ENCODE measurements at regions of chr15 and their contacts with region 1.

Region 1: DNA sequence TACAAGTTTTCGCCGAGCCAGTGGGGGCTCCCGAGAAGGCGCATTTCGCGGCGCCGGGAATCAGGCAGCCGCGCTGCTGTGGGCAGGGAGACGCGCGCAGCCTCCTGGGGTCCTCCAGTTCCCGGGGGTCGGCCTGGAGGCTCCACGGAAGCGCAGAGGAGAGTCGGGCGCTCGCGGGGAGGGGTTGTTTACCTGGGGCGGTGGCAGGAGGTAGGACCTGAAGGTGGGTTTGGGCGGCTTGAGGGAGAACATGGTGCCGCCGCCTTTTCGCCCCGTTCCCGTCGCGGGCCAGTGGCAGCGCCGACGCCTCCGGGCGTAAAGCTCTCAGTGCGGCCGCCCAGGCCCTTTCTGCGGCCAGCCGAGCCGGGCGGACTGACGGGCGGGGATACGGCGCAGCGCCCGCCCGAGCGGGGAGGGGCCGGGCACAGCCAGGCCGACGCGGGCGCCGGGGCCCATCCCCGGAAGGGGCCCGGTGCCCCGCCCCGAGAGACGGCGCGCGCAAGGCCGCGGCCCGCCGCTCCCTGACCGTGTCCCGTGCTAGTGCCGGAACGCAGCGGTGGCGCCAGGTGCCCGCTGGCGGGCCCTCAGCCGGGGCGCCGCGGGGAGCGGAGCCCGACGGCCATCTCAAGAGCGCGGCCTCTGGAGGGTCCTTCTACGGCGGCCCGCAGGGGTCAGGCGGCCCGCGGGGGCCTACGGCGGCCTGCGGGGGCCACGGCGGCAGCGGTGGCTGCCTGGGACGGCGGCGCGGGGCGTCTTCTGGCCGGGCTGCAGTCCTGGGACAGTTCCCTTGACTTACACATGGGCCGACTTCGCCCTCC is at the start of gene MTMR10:
- DNase-seq: peak; percentile 54 to 84 (median 82)
- ATAC-seq: peak; percentile 96
- H3K4me3 ChIP-seq: peak within 1 kb of the TSS; percentile 96
- H3K4me3 Mint-ChIP-seq: peak within 1 kb of the TSS; percentile 91 to 97 (median 95)
- H3K27ac ChIP-seq: peak within 1 kb of the TSS; percentile 89
- H3K27ac Mint-ChIP-seq: peak within 1 kb of the TSS; percentile 90 to 98 (median 93)
- H3K4me1 ChIP-seq: peaks cover 23 to 27% of the 10 kb centered on the region in 2 donors
- H3K4me1 Mint-ChIP-seq: peaks cover 22 to 49% (median 37%) of the 10 kb centered on the region in 7 donors
- H3K27me3 ChIP-seq: no peaks in the 10 kb centered on the region
- H3K27me3 Mint-ChIP-seq: peaks cover 0 to 13% (median 0%) of the 10 kb centered on the region in 5 donors
- total RNA-seq, gene MTMR10: 21.2 to 50.8 (median 34.0) TPM

Region 2: DNA sequence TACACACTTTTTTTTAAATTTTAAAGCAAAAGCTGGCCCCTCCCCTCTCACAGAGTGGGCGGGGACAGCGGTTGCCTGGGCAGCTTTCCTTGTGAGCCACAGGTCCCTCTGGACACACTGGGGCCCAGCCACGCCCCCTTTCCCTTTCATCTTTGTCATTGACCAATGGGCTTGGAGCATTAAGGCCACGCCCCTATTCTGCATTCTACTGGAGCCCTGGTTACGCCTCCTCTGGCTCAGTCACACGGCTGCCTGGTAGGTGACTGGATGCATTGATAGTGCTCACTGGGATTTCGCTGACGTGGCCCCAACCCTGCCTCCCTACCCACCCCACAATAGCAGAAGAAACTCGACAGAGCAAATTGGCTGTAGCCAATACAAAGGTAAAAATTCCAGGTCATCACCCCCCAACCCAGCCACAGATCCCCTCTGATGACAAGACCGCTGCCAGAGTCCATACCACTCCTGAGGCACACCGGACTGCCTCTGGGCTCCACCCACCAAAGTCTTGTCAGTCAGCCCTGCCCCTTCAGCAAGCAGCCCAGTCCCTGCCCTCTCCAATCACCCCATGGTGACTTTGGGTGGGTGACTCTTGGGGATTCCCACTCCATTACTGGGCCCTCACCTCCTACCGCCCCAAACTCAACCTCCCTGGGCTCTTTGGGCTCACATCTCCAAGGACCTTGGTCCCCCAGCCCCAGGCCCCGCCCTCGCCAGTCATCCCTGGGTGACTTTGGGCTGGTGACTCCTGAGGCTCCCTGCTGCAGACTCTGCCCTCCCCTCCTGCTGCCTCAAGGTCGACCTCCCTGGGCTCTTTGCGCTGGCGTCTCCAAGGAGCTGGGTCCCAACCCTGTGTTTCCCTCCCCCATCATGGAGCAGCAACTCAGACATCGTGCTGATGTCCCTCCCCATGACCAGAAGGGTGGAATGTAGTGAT is 200.0 kb before region 1 on chr15:
- CTCF ChIA-PET with region 1: no interaction called
- POLR2A ChIA-PET with region 1: no interaction called
- intact Hi-C with region 1: no loop called
- DNase-seq: no peak
- ATAC-seq: no peak
- H3K4me3 ChIP-seq: no peak overlapping the region
- H3K4me3 Mint-ChIP-seq: no peak overlapping the region
- H3K27ac ChIP-seq: no peak overlapping the region
- H3K27ac Mint-ChIP-seq: no peak overlapping the region
- H3K4me1 ChIP-seq: no peaks in the 10 kb centered on the region
- H3K4me1 Mint-ChIP-seq: no peaks in the 10 kb centered on the region
- H3K27me3 ChIP-seq: no peaks in the 10 kb centered on the region
- H3K27me3 Mint-ChIP-seq: peaks cover 4 to 23% (median 16%) of the 10 kb centered on the region in 5 donors

Region 3: GRCh38 chr15:30922480-30923311 is 68.8 kb before region 1 on chr15:
- CTCF ChIA-PET with region 1: no interaction called
- POLR2A ChIA-PET with region 1: no interaction called
- intact Hi-C with region 1: no loop called
- DNase-seq: no peak
- ATAC-seq: no peak
- H3K4me3 ChIP-seq: no peak overlapping the region
- H3K4me3 Mint-ChIP-seq: no peak overlapping the region
- H3K27ac ChIP-seq: no peak overlapping the region
- H3K27ac Mint-ChIP-seq: peak overlapping the region in 1 of 9 donors; percentile 53
- H3K4me1 ChIP-seq: no peaks in the 10 kb centered on the region
- H3K4me1 Mint-ChIP-seq: peaks cover 0 to 6% (median 0%) of the 10 kb centered on the region in 7 donors
- H3K27me3 ChIP-seq: no peaks in the 10 kb centered on the region
- H3K27me3 Mint-ChIP-seq: no peaks in the 10 kb centered on the region

Region 4: GRCh38 chr15:30979457-30979856 is 12.0 kb before region 1 on chr15:
- CTCF ChIA-PET with region 1: no interaction called
- POLR2A ChIA-PET with region 1: interaction called, 4 read pairs
- intact Hi-C with region 1: loop called in 1 of 2 experiments (anchors 2 kb)
- DNase-seq: no peak
- ATAC-seq: peak; percentile 63
- H3K4me3 ChIP-seq: no peak overlapping the region
- H3K4me3 Mint-ChIP-seq: peak overlapping the region in 5 of 10 donors; percentile 5 to 37 (median 8)
- H3K27ac ChIP-seq: no peak overlapping the region
- H3K27ac Mint-ChIP-seq: peak overlapping the region in 1 of 9 donors; percentile 6
- H3K4me1 ChIP-seq: no peaks in the 10 kb centered on the region
- H3K4me1 Mint-ChIP-seq: peaks cover 22 to 79% (median 65%) of the 10 kb centered on the region in 7 donors
- H3K27me3 ChIP-seq: no peaks in the 10 kb centered on the region
- H3K27me3 Mint-ChIP-seq: no peaks in the 10 kb centered on the region

Region 5: DNA sequence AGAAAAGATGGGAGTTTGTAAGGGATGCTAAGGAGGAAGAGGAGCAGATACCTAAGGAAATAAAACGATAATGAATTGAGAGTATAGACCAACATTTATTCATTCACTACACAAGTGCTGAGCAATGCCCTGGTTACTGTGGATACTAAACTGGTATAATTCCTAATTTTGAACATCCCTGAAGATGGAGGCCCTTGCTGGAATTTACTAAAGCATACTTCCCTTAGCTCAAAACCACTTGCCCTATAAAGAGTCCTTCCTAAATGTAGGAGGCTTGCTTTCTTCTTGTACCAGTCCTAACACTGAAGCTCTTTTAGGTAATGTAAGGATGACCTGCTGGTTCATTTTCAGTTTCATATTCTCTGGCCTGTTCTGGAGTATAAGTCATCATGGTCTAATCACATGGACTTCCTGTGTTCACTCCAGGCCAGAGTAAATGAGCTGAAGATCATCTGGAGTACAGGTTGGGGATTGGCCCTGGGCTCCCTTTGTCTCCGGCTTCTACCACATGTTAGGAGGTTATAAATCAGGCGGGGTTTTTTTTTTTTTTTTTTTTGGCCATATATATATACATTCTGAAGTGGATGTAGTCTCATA is 40.1 kb after region 1 on chr15:
- CTCF ChIA-PET with region 1: no interaction called
- POLR2A ChIA-PET with region 1: interaction called, 3 read pairs
- intact Hi-C with region 1: loop called in 1 of 2 experiments (anchors 5 kb)
- DNase-seq: no peak
- ATAC-seq: peak; percentile 29
- H3K4me3 ChIP-seq: no peak overlapping the region
- H3K4me3 Mint-ChIP-seq: no peak overlapping the region
- H3K27ac ChIP-seq: no peak overlapping the region
- H3K27ac Mint-ChIP-seq: no peak overlapping the region
- H3K4me1 ChIP-seq: no peaks in the 10 kb centered on the region
- H3K4me1 Mint-ChIP-seq: peaks cover 0 to 6% (median 0%) of the 10 kb centered on the region in 7 donors
- H3K27me3 ChIP-seq: no peaks in the 10 kb centered on the region
- H3K27me3 Mint-ChIP-seq: peaks cover 0 to 26% (median 11%) of the 10 kb centered on the region in 5 donors

Region 6: DNA sequence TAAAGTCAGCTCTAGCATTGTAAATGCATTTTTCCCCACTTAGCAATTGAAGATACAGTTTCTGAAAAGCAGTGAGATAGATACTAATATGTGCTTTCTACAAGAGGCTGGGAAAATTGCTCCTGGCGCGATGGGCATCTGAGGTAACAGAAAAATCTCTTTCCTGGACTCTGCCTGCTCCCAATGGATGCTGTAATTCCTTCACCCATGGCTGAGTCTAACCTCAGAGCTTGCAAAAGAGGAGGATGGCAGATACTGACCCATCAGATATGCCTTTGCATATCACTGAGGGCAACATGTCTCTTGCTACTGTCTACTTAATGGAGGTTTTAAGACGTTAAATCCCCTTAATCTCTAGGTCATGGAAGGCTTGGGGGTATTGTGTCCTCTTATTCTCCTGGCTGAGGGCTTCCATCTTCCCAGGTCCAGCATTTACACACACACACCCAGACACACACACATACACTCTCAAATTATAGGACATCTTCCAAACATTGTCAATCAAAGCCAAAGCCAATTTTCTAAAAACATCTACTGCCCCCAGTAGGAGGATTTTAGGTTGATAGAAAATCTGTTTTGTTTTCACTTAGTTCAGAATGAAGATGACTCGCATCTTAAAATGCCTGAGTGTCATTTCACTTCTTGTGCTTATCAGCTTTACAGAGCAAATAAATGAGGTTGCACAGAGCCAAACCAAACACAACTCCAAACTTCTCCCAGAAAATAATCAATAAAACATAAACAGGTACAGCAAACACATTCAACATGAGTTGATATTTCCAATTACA is 107.7 kb after region 1 on chr15:
- CTCF ChIA-PET with region 1: no interaction called
- POLR2A ChIA-PET with region 1: no interaction called
- intact Hi-C with region 1: loop called in 1 of 2 experiments (anchors 2 kb)
- DNase-seq: peak in 1 of 9 donors; percentile 7
- ATAC-seq: no peak
- H3K4me3 ChIP-seq: no peak overlapping the region
- H3K4me3 Mint-ChIP-seq: no peak overlapping the region
- H3K27ac ChIP-seq: no peak overlapping the region
- H3K27ac Mint-ChIP-seq: no peak overlapping the region
- H3K4me1 ChIP-seq: no peaks in the 10 kb centered on the region
- H3K4me1 Mint-ChIP-seq: no peaks in the 10 kb centered on the region
- H3K27me3 ChIP-seq: no peaks in the 10 kb centered on the region
- H3K27me3 Mint-ChIP-seq: peaks cover 0 to 16% (median 0%) of the 10 kb centered on the region in 5 donors

Region 7: DNA sequence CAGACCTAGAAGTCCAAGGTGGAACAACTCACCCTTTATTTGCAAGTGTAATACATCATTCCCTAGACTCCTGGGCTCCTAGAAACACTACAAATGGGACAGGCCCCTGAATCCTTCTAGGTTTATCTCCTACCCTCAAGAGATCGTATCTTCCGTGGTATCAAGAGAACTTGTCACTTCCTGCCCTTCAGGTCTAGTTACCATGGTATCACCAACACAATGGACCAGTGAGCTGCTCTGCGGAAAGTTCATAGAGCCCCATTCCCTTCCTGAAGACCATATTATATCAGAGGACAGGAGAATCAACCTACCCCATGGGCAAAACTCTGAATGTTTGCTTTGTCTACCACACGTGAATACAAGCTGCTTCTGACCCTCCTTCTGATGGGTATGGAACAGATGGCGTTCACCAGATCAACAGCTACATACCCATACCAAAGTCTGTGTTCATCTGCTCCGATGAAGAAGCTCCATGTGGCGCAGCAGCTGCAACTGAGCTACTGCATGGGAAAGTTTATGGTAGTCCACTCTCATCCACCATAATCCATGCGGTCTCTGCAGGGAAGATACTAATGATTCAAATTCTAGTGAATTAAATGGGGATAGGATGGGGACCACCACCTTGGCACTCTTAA is 250.5 kb after region 1 on chr15:
- CTCF ChIA-PET with region 1: no interaction called
- POLR2A ChIA-PET with region 1: no interaction called
- intact Hi-C with region 1: loop called in 1 of 2 experiments (anchors 5 kb)
- DNase-seq: peak in 5 of 9 donors; percentile 47 to 78 (median 65)
- ATAC-seq: peak; percentile 95
- H3K4me3 ChIP-seq: no peak overlapping the region
- H3K4me3 Mint-ChIP-seq: peak overlapping the region; percentile 2 to 74 (median 50)
- H3K27ac ChIP-seq: peak overlapping the region; percentile 32
- H3K27ac Mint-ChIP-seq: peak overlapping the region; percentile 36 to 97 (median 90)
- H3K4me1 ChIP-seq: peaks cover 13 to 28% of the 10 kb centered on the region in 2 donors
- H3K4me1 Mint-ChIP-seq: peaks cover 34 to 49% (median 42%) of the 10 kb centered on the region in 7 donors
- H3K27me3 ChIP-seq: no peaks in the 10 kb centered on the region
- H3K27me3 Mint-ChIP-seq: peaks cover 0 to 3% (median 0%) of the 10 kb centered on the region in 5 donors

Region 8: GRCh38 chr15:31870328-31871165 is 879.1 kb after region 1 on chr15:
- CTCF ChIA-PET with region 1: no interaction called
- POLR2A ChIA-PET with region 1: no interaction called
- intact Hi-C with region 1: loop called in 1 of 2 experiments (anchors 2 kb)
- DNase-seq: peak; percentile 78 to 92 (median 89)
- ATAC-seq: peak; percentile 94
- H3K4me3 ChIP-seq: peak within 1 kb of the TSS; percentile 72
- H3K4me3 Mint-ChIP-seq: peak within 1 kb of the TSS; percentile 90 to 98 (median 95)
- H3K27ac ChIP-seq: peak within 1 kb of the TSS; percentile 62
- H3K27ac Mint-ChIP-seq: peak within 1 kb of the TSS; percentile 59 to 98 (median 92)
- H3K4me1 ChIP-seq: peaks cover 5 to 7% of the 10 kb centered on the region in 2 donors
- H3K4me1 Mint-ChIP-seq: peaks cover 11 to 23% (median 14%) of the 10 kb centered on the region in 7 donors
- H3K27me3 ChIP-seq: no peaks in the 10 kb centered on the region
- H3K27me3 Mint-ChIP-seq: peaks cover 4 to 56% (median 11%) of the 10 kb centered on the region in 5 donors